ENCODE measurements at regions of chr2 and their contacts with region 1.

Region 1: GRCh38 chr2:70086838-70087701 is at the start of gene PCBP1:
- DNase-seq: peak; percentile 98
- H3K4me3 Mint-ChIP-seq: peak within 1 kb of the TSS; percentile 96
- H3K27ac Mint-ChIP-seq: peak within 1 kb of the TSS; percentile 100
- H3K4me1 Mint-ChIP-seq: peaks cover 56% of the 10 kb centered on the region
- H3K27me3 Mint-ChIP-seq: no peaks in the 10 kb centered on the region
- total RNA-seq, gene PCBP1: 443 and 447 TPM in 2 replicates

Region 2: GRCh38 chr2:68766376-68766845 is 1320.7 kb before region 1 on chr2:
- intact Hi-C with region 1: loop called (anchors 10 kb)
- DNase-seq: peak; percentile 92
- H3K4me3 Mint-ChIP-seq: peak overlapping the region; percentile 76
- H3K27ac Mint-ChIP-seq: peak overlapping the region; percentile 95
- H3K4me1 Mint-ChIP-seq: peaks cover 86% of the 10 kb centered on the region
- H3K27me3 Mint-ChIP-seq: no peaks in the 10 kb centered on the region

Region 3: DNA sequence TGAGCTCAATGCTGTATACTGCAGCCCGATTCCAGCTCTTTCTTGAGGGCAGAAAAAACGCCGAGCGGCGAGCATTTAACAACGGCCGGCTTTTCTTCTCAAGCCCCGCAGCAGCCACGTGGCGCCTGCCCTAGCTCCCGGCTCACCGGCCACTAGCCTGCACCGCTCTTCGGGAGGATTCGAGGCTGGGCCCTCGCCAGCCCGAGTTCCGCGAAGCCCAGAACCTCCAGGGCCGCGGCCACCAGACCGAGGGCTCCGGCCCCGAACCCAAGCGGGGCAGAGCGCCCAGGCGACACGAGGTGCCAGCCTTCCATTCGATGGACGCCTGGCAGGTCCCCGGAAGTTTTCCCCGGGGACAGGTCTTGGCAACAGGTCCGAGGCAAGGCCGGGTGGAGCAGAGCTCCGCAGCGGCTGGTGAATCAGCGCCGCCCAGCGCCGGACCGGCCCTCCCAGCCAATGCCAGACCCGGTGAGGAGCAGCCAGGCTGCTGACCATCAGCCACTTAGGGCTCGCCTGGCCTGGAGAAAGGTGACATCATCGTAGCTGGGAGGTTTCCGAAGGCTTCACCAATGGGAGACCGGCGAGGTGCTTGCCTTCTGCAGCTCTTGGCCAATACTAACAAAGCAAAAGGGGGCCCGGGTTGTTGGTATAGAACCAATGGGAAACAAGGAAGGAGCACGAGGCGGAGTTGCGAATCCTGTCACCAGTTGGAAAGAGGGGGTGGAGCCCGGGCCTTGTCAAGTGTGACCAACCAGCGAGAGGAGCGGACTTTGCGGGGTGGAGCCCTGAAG is 172.7 kb before region 1 on chr2:
- intact Hi-C with region 1: loop called (anchors 1 kb)
- DNase-seq: peak; percentile 100
- H3K4me3 Mint-ChIP-seq: peak overlapping the region; percentile 86
- H3K27ac Mint-ChIP-seq: peak overlapping the region; percentile 93
- H3K4me1 Mint-ChIP-seq: peaks cover 29% of the 10 kb centered on the region
- H3K27me3 Mint-ChIP-seq: no peaks in the 10 kb centered on the region

Region 4: GRCh38 chr2:70050631-70051030 is 36.4 kb before region 1 on chr2:
- intact Hi-C with region 1: no loop called
- DNase-seq: no peak
- H3K4me3 Mint-ChIP-seq: no peak overlapping the region
- H3K27ac Mint-ChIP-seq: no peak overlapping the region
- H3K4me1 Mint-ChIP-seq: peaks cover 21% of the 10 kb centered on the region
- H3K27me3 Mint-ChIP-seq: no peaks in the 10 kb centered on the region

Region 5: DNA sequence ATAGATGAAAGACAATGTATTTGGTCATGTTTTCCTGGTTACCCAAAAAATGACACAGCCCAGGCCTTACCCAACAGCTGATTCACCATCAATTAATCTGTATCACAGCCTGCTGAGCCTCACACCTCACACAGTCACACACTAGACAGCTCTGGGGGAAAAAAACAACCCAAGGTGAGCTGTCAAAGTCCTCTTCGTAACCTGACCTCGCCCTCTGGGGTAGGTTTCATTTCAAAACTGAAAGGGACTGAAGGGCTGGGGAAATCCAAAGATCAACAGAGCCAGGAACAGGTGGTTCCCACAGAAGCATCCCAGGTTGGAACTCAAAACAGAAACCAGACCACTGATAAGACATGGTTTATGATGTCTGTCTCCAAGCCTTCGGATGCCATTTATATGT is 18.0 kb before region 1 on chr2:
- intact Hi-C with region 1: loop called (anchors 1 kb)
- DNase-seq: peak; percentile 94
- H3K4me3 Mint-ChIP-seq: peak overlapping the region; percentile 47
- H3K27ac Mint-ChIP-seq: peak overlapping the region; percentile 91
- H3K4me1 Mint-ChIP-seq: peaks cover 43% of the 10 kb centered on the region
- H3K27me3 Mint-ChIP-seq: no peaks in the 10 kb centered on the region

Region 6: DNA sequence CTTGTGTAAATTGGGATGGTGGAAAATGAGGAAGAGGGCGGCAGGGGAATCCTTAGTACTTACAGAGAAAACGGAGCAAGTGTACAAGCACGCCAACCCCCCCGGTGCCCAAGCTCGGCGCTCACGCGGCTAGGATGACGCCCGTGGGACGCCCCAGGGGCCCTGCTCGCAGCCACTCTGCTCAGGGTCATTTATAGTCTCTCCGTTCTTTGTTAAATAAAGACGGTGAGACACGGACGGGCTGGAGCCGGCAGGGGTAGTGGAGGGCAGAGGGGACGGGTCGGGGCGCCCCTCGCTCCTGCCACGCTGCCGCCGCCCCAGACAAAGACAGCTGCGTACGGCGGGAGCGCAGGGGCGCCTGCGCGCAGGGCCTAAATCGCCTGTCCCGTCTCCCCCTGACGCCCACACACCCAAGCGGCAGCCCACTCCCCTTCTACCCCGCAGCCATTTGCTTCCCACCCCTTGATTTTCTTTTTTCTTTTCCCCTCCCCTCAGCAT is 38.0 kb after region 1 on chr2:
- intact Hi-C with region 1: loop called (anchors 1 kb)
- DNase-seq: peak; percentile 89
- H3K4me3 Mint-ChIP-seq: peak overlapping the region; percentile 94
- H3K27ac Mint-ChIP-seq: peak overlapping the region; percentile 100
- H3K4me1 Mint-ChIP-seq: peaks cover 63% of the 10 kb centered on the region
- H3K27me3 Mint-ChIP-seq: no peaks in the 10 kb centered on the region

Region 7: DNA sequence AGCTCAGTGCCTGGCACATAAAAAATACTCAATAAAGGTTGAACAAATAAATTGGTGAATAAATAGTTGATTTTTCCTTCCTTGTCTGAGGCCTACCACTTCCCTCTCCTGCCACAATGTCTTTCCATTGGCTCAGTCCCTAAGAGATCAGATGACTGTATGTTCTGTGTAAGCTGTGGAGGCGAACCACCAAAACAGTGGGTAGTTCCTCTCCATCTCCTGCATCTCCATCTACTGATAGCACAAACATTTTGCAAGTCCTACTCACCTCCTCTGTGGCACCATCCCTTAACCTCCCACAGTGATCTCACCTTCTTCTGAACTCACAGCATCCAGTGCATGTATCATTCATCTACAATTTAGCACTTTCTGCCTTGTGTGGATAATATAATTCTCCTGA is 50.4 kb after region 1 on chr2:
- intact Hi-C with region 1: loop called (anchors 1 kb)
- DNase-seq: peak; percentile 80
- H3K4me3 Mint-ChIP-seq: peak overlapping the region; percentile 62
- H3K27ac Mint-ChIP-seq: peak overlapping the region; percentile 87
- H3K4me1 Mint-ChIP-seq: peaks cover 67% of the 10 kb centered on the region
- H3K27me3 Mint-ChIP-seq: no peaks in the 10 kb centered on the region

Region 8: GRCh38 chr2:70190418-70191243 is 103.6 kb after region 1 on chr2 and contains the start of gene C2orf42:
- intact Hi-C with region 1: loop called (anchors 1 kb)
- DNase-seq: peak; percentile 98
- H3K4me3 Mint-ChIP-seq: peak within 1 kb of the TSS; percentile 92
- H3K27ac Mint-ChIP-seq: peak within 1 kb of the TSS; percentile 100
- H3K4me1 Mint-ChIP-seq: peaks cover 21% of the 10 kb centered on the region
- H3K27me3 Mint-ChIP-seq: peaks cover 2% of the 10 kb centered on the region
- total RNA-seq, gene C2orf42: 18.5 and 19.6 TPM in 2 replicates